Heart left ventricle (tissue), 16 donors: ENCODE measurements at regions of chrX and their contacts with region 1.

Region 1: GRCh38 chrX:75156021-75156945 is at the start of gene ABCB7:
- DNase-seq: peak in 4 of 5 donors; percentile 48 to 76 (median 51)
- ATAC-seq: peak; percentile 92 to 96 (median 94)
- H3K4me3 ChIP-seq: peak within 1 kb of the TSS; percentile 13 to 85 (median 67)
- H3K27ac ChIP-seq: peak within 1 kb of the TSS; percentile 26 to 90 (median 80)
- H3K4me1 ChIP-seq: peaks cover 0 to 20% (median 5%) of the 10 kb centered on the region in 12 donors
- H3K27me3 ChIP-seq: no peaks in the 10 kb centered on the region
- CTCF ChIP-seq: peak in 4 of 12 donors; percentile 12 to 44 (median 38)
- POLR2A ChIP-seq: peak in 1 of 2 donors; percentile 19
- total RNA-seq, gene ABCB7: 29.3 to 58.5 (median 36.9) TPM

Region 2: GRCh38 chrX:74349387-74349786 is 806.9 kb before region 1 on chrX:
- intact Hi-C with region 1: no loop called
- DNase-seq: no peak
- ATAC-seq: no peak
- H3K4me3 ChIP-seq: no peak overlapping the region
- H3K27ac ChIP-seq: no peak overlapping the region
- H3K4me1 ChIP-seq: no peaks in the 10 kb centered on the region
- H3K27me3 ChIP-seq: peaks cover 0 to 6% (median 0%) of the 10 kb centered on the region in 9 donors
- CTCF ChIP-seq: no peak
- POLR2A ChIP-seq: no peak

Region 3: GRCh38 chrX:75086731-75087195 is 69.5 kb before region 1 on chrX:
- intact Hi-C with region 1: no loop called
- DNase-seq: no peak
- ATAC-seq: peak in 1 of 4 donors; percentile 28
- H3K4me3 ChIP-seq: no peak overlapping the region
- H3K27ac ChIP-seq: peak overlapping the region in 1 of 12 donors; percentile 14
- H3K4me1 ChIP-seq: peaks cover 0 to 5% (median 0%) of the 10 kb centered on the region in 12 donors
- H3K27me3 ChIP-seq: peaks cover 0 to under 1% (median 0%) of the 10 kb centered on the region in 9 donors
- CTCF ChIP-seq: no peak
- POLR2A ChIP-seq: no peak

Region 4: DNA sequence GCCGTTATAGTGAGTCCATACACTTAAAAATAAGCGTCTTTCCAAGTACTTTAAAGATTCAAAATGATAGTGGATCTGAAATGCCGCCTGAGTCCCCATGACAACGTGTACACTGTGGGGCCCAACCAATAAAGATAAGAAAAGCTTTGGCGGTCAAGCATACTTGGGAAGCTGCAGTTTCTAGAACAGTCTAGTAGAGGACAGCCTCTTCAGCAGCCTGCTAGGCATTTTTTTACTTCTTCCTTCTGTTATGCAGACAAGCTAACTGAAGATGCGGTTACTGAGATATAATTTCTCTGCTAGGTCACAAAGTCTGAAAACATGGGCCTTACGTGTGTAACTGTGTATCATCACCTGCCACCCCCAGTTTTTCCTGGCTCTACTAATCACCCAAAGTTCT is 117.2 kb after region 1 on chrX:
- intact Hi-C with region 1: loop called in 4 of 10 experiments (anchors 2 to 10 kb)
- DNase-seq: peak in 1 of 5 donors; percentile 5
- ATAC-seq: peak in 2 of 4 donors; percentile 23 to 26
- H3K4me3 ChIP-seq: peak overlapping the region; percentile 42 to 89 (median 74)
- H3K27ac ChIP-seq: peak overlapping the region; percentile 80 to 96 (median 92)
- H3K4me1 ChIP-seq: peaks cover 0 to 35% (median 17%) of the 10 kb centered on the region in 12 donors
- H3K27me3 ChIP-seq: no peaks in the 10 kb centered on the region
- CTCF ChIP-seq: no peak
- POLR2A ChIP-seq: no peak

Region 5: DNA sequence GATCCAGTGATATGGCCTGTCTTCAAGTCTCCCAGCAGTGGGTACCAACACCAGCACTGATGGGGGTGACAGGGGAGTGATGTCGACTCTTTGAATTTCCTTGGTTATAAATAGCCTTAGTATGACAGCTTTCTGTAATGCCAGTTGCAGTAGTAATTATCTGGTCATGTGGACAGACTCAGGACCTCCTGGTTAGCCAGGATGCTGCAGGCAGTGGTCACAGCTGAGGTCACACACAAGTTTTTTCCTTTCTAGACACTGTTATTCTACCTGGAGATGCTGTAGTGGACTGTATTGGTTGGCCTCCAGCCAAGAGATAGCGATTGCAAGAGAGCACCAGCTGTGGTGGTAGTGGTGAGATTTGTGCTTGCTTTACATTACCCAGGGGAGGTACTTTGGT is 181.2 kb after region 1 on chrX:
- intact Hi-C with region 1: no loop called
- DNase-seq: no peak
- ATAC-seq: no peak
- H3K4me3 ChIP-seq: no peak overlapping the region
- H3K27ac ChIP-seq: no peak overlapping the region
- H3K4me1 ChIP-seq: no peaks in the 10 kb centered on the region
- H3K27me3 ChIP-seq: no peaks in the 10 kb centered on the region
- CTCF ChIP-seq: no peak
- POLR2A ChIP-seq: no peak

Region 6: GRCh38 chrX:75522565-75523431 is 366.5 kb after region 1 on chrX and contains the start of gene ZDHHC15:
- intact Hi-C with region 1: loop called in 1 of 10 experiments (anchors 5 kb)
- DNase-seq: peak; percentile 46 to 80 (median 72)
- ATAC-seq: peak; percentile 96 to 98 (median 98)
- H3K4me3 ChIP-seq: peak within 1 kb of the TSS; percentile 35 to 83 (median 59)
- H3K27ac ChIP-seq: peak within 1 kb of the TSS; percentile 16 to 79 (median 66)
- H3K4me1 ChIP-seq: peaks cover 0 to 8% (median 0%) of the 10 kb centered on the region in 12 donors
- H3K27me3 ChIP-seq: no peaks in the 10 kb centered on the region
- CTCF ChIP-seq: peak in 2 of 12 donors; percentile 5 to 10
- POLR2A ChIP-seq: no peak
- total RNA-seq, gene ZDHHC15: 1.6 to 4.1 (median 2.7) TPM